Naive thymus-derived CD4-positive, alpha-beta T cell (primary cell): ENCODE measurements at regions of chr2 and their contacts with region 1.

Region 1: GRCh38 chr2:119126650-119127049 is 31.9 kb downstream of the C1QL2 start:
- DNase-seq: peak in 6 of 9 donors; percentile 10 to 32 (median 12)
- ATAC-seq: peak; percentile 60
- H3K4me3 ChIP-seq: no peak overlapping the region
- H3K4me3 Mint-ChIP-seq: no peak overlapping the region
- H3K27ac ChIP-seq: no peak overlapping the region
- H3K27ac Mint-ChIP-seq: no peak overlapping the region
- H3K4me1 ChIP-seq: no peaks in the 10 kb centered on the region
- H3K4me1 Mint-ChIP-seq: peaks cover 0 to 4% (median 0%) of the 10 kb centered on the region in 7 donors
- H3K27me3 ChIP-seq: no peaks in the 10 kb centered on the region
- H3K27me3 Mint-ChIP-seq: peaks cover 5 to 56% (median 18%) of the 10 kb centered on the region in 5 donors

Region 2: GRCh38 chr2:119174216-119175037 is 47.8 kb after region 1 on chr2:
- CTCF ChIA-PET with region 1: no interaction called
- POLR2A ChIA-PET with region 1: no interaction called
- intact Hi-C with region 1: loop called in 1 of 2 experiments (anchors 1 kb)
- DNase-seq: peak in 8 of 9 donors; percentile 9 to 53 (median 46)
- ATAC-seq: peak; percentile 76
- H3K4me3 ChIP-seq: no peak overlapping the region
- H3K4me3 Mint-ChIP-seq: no peak overlapping the region
- H3K27ac ChIP-seq: no peak overlapping the region
- H3K27ac Mint-ChIP-seq: peak overlapping the region in 1 of 9 donors; percentile 9
- H3K4me1 ChIP-seq: no peaks in the 10 kb centered on the region
- H3K4me1 Mint-ChIP-seq: no peaks in the 10 kb centered on the region
- H3K27me3 ChIP-seq: no peaks in the 10 kb centered on the region
- H3K27me3 Mint-ChIP-seq: peaks cover 0 to 2% (median 0%) of the 10 kb centered on the region in 5 donors